A549 (cell line): ENCODE measurements at regions of chr13 and their contacts with region 1.

Region 1: DNA sequence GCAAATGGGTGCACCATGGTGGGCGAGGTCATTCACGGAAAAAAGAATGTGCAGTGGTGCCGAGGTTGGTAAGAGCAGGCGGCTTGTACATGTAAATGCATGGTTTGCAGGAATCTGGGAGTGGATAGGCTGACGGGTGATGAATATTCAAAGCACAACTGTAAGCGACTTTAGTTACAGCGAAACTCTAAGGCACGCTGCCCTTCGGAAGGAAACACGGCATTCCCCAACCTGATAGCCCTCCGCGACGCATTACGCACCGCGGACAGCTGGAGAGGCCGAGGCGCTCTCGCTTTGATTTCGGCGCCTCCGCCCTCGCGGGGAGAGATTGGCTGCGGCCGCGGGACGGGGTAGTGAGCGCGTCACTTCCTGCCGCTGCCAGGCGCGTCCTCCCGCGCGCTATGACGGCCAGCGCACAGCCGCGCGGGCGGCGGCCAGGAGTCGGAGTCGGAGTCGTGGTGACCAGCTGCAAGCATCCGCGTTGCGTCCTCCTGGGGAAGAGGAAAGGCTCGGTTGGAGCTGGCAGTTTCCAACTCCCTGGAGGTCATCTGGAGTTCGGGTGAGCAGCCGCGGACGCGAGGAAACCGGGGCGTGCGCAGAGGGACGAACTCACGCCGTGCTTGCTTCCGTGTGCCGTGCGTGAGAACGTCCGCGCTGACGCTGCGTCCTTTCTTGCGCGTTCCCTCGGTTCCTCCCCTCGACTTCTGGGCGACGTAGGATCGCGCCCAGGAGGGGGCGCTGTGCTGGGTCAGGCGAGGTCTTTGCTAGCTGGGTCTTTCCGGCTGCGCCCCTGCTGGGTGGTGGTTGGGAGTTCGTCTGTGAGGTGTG is at the start of gene NUDT15:
- DNase-seq: peak; percentile 88 to 96
- ATAC-seq: peak; percentile 96 to 98
- H3K4me3 ChIP-seq: peak within 1 kb of the TSS; percentile 69
- H3K27ac ChIP-seq: peak within 1 kb of the TSS; percentile 97 to 98
- H3K4me1 ChIP-seq: peaks cover 16% of the 10 kb centered on the region; the same call in 2 of the 3 replicates
- CTCF ChIP-seq: peak; percentile 85
- EP300 ChIP-seq: no peak
- POLR2A ChIP-seq: peak; percentile 76
- RAD21 ChIP-seq: peak; percentile 40 to 42; a peak in 3 of 5 replicates
- polyA plus RNA-seq, gene NUDT15: 27.0 and 35.5 TPM in 2 replicates

Region 2: GRCh38 chr13:47539317-47539716 is 498.2 kb before region 1 on chr13:
- CTCF ChIA-PET with region 1: no interaction called
- POLR2A ChIA-PET with region 1: no interaction called
- DNase-seq: no peak
- ATAC-seq: no peak
- H3K4me3 ChIP-seq: no peak overlapping the region
- H3K27ac ChIP-seq: no peak overlapping the region
- H3K4me1 ChIP-seq: no peaks in the 10 kb centered on the region
- CTCF ChIP-seq: no peak
- EP300 ChIP-seq: no peak
- POLR2A ChIP-seq: no peak
- RAD21 ChIP-seq: no peak

Region 3: GRCh38 chr13:48000778-48001628 is 36.6 kb before region 1 on chr13 and contains the start of gene SUCLA2:
- CTCF ChIA-PET with region 1: interaction called, 11 read pairs
- POLR2A ChIA-PET with region 1: interaction called, 16 read pairs
- DNase-seq: peak; percentile 82 to 87
- ATAC-seq: peak; percentile 97 to 100
- H3K4me3 ChIP-seq: peak within 1 kb of the TSS; percentile 91
- H3K27ac ChIP-seq: peak within 1 kb of the TSS; percentile 94 to 98
- H3K4me1 ChIP-seq: peaks cover 18% of the 10 kb centered on the region
- CTCF ChIP-seq: no peak
- EP300 ChIP-seq: no peak
- POLR2A ChIP-seq: peak; percentile 78
- RAD21 ChIP-seq: no peak
- polyA plus RNA-seq, gene SUCLA2: 62.1 and 65.4 TPM in 2 replicates

Region 4: DNA sequence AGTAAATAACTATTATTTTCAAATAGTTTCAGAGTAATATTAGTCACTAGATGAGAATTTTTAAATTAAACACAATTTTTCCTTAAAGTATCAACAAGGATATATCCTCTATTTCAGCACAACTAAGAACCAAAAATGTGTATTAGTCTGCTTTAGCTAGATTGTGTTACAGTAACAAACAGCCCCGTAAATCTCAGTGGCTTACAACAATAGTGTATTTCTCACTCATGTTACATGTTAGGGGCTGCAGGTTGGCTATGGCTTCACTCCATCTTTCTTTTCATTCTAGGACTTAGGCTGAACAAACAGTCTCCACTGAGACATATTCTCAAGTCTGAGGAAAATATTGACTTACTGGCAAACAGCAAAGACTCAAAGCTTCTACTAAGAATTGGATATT is 24.9 kb before region 1 on chr13:
- CTCF ChIA-PET with region 1: interaction called, 15 read pairs
- POLR2A ChIA-PET with region 1: interaction called, 3 read pairs
- DNase-seq: no peak
- ATAC-seq: no peak
- H3K4me3 ChIP-seq: no peak overlapping the region
- H3K27ac ChIP-seq: no peak overlapping the region
- H3K4me1 ChIP-seq: peaks cover 20% of the 10 kb centered on the region
- CTCF ChIP-seq: no peak
- EP300 ChIP-seq: no peak
- POLR2A ChIP-seq: no peak
- RAD21 ChIP-seq: no peak

Region 5: GRCh38 chr13:48094781-48095502 is 57.4 kb after region 1 on chr13 and contains the start of gene MED4:
- CTCF ChIA-PET with region 1: interaction called, 14 read pairs
- POLR2A ChIA-PET with region 1: interaction called, 19 read pairs
- DNase-seq: peak; percentile 84 to 92
- ATAC-seq: peak; percentile 97 to 99
- H3K4me3 ChIP-seq: peak within 1 kb of the TSS; percentile 82
- H3K27ac ChIP-seq: peak within 1 kb of the TSS; percentile 89 to 98
- H3K4me1 ChIP-seq: peaks cover 11% of the 10 kb centered on the region; the same call in 1 of the 3 replicates
- CTCF ChIP-seq: peak; percentile 84
- EP300 ChIP-seq: no peak
- POLR2A ChIP-seq: peak; percentile 76
- RAD21 ChIP-seq: peak; percentile 24 to 38; a peak in 3 of 5 replicates
- polyA plus RNA-seq, gene MED4: 37.2 and 41.9 TPM in 2 replicates